ENCODE measurements at regions of chr2 and their contacts with region 1.

Region 1: DNA sequence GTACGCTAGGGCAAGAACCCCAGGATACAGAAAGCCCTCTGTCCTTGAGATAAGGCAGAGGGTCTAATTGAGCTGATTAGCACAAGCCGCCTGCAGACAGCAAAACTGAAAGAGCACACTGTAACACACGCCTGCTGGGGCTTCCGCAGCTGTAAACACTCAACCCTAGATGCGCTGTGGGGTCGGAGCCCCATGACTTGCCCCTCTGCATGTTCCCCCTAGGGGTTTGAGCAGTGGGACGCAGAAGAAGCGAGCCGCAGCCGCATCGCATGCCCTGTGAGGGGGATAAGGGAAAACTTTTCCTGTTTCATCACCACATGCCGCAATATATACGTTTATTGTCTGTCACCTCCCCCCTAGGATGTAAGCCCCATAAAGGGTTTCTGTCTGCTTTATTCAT is 384.6 kb downstream of the PLCL1 start:
- DNase-seq: no peak

Region 2: DNA sequence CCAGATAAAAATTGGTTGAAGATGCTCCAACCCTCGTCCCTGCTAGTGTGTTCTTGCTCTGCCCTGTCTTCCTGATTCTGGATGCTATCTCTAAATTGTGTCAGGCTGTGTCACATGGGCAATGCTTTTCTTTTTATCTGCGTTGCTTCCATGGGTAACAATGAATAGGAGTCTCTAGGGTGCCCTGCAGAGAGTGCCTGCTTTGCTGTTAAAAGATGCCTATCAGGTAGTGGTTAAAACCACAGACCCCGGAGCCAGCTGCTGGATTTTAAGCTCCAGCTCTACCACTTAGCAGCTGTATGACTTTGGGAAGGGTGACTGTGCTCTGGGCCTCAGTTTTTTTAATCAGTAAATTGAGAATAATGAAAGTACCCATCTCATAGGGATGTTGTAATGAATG is 44.3 kb before region 1 on chr2:
- intact Hi-C with region 1: loop called in 1 of 2 experiments (anchors 2 kb)
- DNase-seq: no peak

Region 3: DNA sequence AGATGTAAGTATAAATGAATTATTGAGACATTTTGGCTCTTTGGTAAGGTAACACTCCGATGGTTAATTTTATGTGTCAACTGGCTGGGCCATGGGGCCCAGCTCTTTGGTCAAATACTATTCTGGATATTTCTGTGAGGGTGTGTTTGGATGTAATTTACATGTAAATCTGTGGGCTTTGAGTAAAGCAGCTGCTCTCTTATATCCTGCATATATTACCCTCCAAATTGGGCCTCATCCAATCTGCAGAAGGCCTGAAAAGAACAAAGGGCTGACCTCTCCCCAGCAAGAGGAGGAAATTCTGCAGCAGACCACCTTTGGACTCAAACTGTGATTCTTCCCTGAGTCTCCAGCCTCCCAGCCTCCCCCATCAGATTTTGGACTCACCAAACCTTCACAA is 79.5 kb after region 1 on chr2:
- intact Hi-C with region 1: loop called in 1 of 2 experiments (anchors 10 kb)
- DNase-seq: no peak